Heart right ventricle (tissue), 16 donors: ENCODE measurements at regions of chr18 and their contacts with region 1.

Region 1: DNA sequence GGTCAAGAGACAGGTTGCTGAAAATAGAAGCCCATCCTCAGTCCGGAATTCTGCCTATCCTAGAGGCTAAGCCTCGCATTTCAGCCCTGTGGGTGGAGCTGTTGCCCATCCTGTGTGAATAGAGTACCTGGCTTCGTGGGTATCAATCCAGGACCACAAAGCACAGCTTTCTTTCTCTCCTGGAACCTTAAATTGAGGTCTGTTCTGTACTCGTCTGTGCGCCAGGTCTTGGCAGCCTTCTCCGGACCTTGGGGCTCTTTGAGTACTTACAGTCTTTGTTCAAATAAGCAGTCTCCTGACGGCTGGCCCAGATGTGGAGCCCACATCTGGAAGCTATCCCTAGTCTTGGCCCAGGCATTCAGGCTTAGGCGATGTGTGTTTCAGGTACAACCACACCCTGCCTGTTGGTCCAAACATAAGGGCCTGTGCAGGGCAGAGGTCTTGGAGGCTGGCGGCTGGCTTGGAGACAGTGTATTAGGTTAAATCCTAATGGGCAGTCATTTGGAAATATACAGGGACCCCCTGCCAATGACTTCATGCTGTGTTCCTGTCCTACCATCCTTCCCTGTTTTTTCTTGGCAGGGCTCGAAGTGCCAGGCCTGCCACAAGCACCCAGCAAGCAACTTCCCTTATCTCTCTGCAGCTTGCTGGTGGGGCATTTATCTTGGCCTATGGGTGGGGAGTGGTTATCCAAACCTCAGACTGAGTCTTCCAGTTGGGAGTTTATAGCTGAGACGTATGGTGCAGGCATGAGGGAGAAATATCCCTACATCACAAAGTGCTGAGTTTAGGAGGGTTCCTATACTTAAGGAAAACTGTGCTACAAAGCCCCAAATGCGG is 294.1 kb downstream of the BCL2 start:
- DNase-seq: peak in 1 of 2 donors; percentile 19
- ATAC-seq: peak in 5 of 8 donors; percentile 44 to 85 (median 75)
- H3K4me3 ChIP-seq: no peak overlapping the region
- H3K27ac ChIP-seq: no peak overlapping the region
- H3K4me1 ChIP-seq: peaks cover 0 to 4% (median 0%) of the 10 kb centered on the region in 9 donors
- H3K27me3 ChIP-seq: no peaks in the 10 kb centered on the region
- CTCF ChIP-seq: peak; percentile 30 to 65 (median 51)

Region 2: GRCh38 chr18:62957885-62958472 is 67.5 kb before region 1 on chr18:
- intact Hi-C with region 1: no loop called
- DNase-seq: peak in 1 of 2 donors; percentile 46
- ATAC-seq: peak in 7 of 8 donors; percentile 29 to 72 (median 51)
- H3K4me3 ChIP-seq: no peak overlapping the region
- H3K27ac ChIP-seq: no peak overlapping the region
- H3K4me1 ChIP-seq: peaks cover 0 to 16% (median 8%) of the 10 kb centered on the region in 9 donors
- H3K27me3 ChIP-seq: no peaks in the 10 kb centered on the region
- CTCF ChIP-seq: peak in 8 of 9 donors; percentile 33 to 65 (median 56)

Region 3: DNA sequence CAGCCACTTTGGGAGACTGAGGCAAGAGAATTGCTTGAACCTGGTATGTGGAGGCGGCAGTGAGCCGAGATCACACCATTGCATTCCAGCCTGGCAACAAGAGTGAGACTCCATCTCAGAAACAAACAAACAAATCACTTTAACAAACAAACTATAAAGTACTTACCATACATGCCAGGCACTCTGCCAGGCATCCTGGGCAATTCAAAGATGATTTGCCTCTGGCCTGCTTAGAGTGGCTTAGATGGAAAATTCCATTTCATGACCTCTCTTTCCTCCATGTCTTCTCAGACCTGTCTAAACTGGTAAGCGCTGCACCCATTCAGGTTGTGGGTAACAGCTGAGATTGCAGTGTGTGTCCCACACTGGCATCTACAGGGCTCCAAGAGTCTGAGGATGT is 20.9 kb after region 1 on chr18:
- intact Hi-C with region 1: no loop called
- DNase-seq: no peak
- ATAC-seq: no peak
- H3K4me3 ChIP-seq: no peak overlapping the region
- H3K27ac ChIP-seq: no peak overlapping the region
- H3K4me1 ChIP-seq: no peaks in the 10 kb centered on the region
- H3K27me3 ChIP-seq: peaks cover 0 to 8% (median 0%) of the 10 kb centered on the region in 7 donors
- CTCF ChIP-seq: no peak

Region 4: DNA sequence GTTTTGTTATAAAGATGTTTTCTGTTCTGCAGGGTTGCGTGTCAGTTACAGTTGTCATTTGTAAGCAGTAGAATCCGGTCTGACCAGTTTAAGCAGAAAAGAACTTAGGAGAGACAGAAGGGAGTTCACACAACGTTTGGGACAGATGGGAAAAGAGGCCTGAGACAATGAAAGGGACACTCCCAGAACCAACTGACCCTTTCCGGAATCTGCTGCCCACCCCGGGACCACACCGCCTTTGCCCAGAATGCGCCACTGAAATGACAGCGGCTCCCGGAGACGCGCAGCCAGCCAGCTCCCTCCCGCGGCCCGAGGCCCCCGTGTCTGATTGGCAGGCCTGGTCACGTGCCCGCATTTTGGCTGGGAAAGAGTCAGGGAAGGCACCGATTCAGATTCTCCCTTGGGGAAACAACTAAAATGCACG is 49.5 kb after region 1 on chr18:
- intact Hi-C with region 1: no loop called
- DNase-seq: peak; percentile 78 to 82
- ATAC-seq: peak; percentile 91 to 99 (median 97)
- H3K4me3 ChIP-seq: peak overlapping the region in 9 of 10 donors; percentile 26 to 57 (median 52)
- H3K27ac ChIP-seq: peak overlapping the region in 9 of 10 donors; percentile 23 to 73 (median 56)
- H3K4me1 ChIP-seq: peaks cover 0 to 14% (median 0%) of the 10 kb centered on the region in 9 donors
- H3K27me3 ChIP-seq: no peaks in the 10 kb centered on the region
- CTCF ChIP-seq: peak in 2 of 9 donors; percentile 11 to 18

Region 5: DNA sequence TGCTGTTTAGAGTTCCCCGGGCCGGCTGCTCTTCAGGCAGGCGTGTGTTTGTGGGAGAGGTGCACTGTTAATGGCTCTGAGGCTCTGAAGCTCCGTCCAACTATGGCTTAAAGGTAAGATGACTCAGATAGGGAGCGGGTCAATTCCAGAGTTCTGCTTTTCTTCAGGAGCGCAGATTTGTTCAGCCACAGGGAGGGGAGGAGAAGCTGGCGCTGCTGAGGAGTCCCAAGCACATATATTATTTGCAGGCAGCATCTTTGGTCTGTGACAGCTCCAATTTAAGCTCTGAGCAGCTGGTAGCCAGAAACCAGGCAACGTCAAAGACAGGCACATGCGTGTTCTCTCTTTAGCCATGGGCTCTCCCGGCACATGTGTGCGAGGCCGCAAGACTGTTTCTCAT is 64.9 kb after region 1 on chr18:
- intact Hi-C with region 1: no loop called
- DNase-seq: no peak
- ATAC-seq: no peak
- H3K4me3 ChIP-seq: no peak overlapping the region
- H3K27ac ChIP-seq: no peak overlapping the region
- H3K4me1 ChIP-seq: no peaks in the 10 kb centered on the region
- H3K27me3 ChIP-seq: no peaks in the 10 kb centered on the region
- CTCF ChIP-seq: no peak

Region 6: DNA sequence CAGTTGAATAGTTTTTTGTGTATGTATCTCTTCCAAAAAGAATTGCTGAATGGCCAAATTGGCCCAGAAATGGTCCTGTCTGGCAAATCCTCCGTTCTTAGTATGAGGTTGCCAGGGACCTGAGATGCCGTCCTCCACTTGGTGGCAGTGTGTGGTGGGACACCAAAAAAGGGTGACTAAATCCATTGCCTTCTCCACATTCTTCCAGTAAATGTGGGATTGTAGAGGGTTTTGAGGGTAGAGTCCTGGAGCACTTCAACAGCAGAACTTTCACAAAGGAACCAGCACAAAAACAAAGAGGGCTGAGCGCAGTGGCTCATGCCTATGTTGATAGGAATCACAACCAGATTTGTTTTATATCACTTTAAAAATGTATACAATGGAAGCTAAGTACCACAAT is 94.2 kb after region 1 on chr18:
- intact Hi-C with region 1: loop called in 4 of 10 experiments (anchors 5 to 10 kb)
- DNase-seq: no peak
- ATAC-seq: peak in 6 of 8 donors; percentile 29 to 77 (median 67)
- H3K4me3 ChIP-seq: no peak overlapping the region
- H3K27ac ChIP-seq: no peak overlapping the region
- H3K4me1 ChIP-seq: peaks cover 0 to 21% (median 7%) of the 10 kb centered on the region in 9 donors
- H3K27me3 ChIP-seq: no peaks in the 10 kb centered on the region
- CTCF ChIP-seq: peak in 8 of 9 donors; percentile 12 to 68 (median 50)

Region 7: GRCh38 chr18:63138436-63139340 is 113.2 kb after region 1 on chr18:
- intact Hi-C with region 1: loop called in 3 of 10 experiments (anchors 10 kb)
- DNase-seq: peak in 1 of 2 donors; percentile 39
- ATAC-seq: peak in 6 of 8 donors; percentile 32 to 54 (median 46)
- H3K4me3 ChIP-seq: peak overlapping the region in 8 of 10 donors; percentile 4 to 41 (median 30)
- H3K27ac ChIP-seq: peak overlapping the region in 7 of 10 donors; percentile 9 to 77 (median 49)
- H3K4me1 ChIP-seq: peaks cover 0 to 67% (median 58%) of the 10 kb centered on the region in 9 donors
- H3K27me3 ChIP-seq: no peaks in the 10 kb centered on the region
- CTCF ChIP-seq: no peak

Region 8: GRCh38 chr18:63267975-63268721 is 242.7 kb after region 1 on chr18:
- intact Hi-C with region 1: loop called in 1 of 10 experiments (anchors 10 kb)
- DNase-seq: no peak
- ATAC-seq: no peak
- H3K4me3 ChIP-seq: no peak overlapping the region
- H3K27ac ChIP-seq: no peak overlapping the region
- H3K4me1 ChIP-seq: peaks cover 0 to 34% (median 16%) of the 10 kb centered on the region in 9 donors
- H3K27me3 ChIP-seq: no peaks in the 10 kb centered on the region
- CTCF ChIP-seq: no peak

Region 9: GRCh38 chr18:63329431-63330145 is 304.1 kb after region 1 on chr18:
- intact Hi-C with region 1: loop called in 2 of 10 experiments (anchors 5 kb)
- DNase-seq: no peak
- ATAC-seq: no peak
- H3K4me3 ChIP-seq: no peak overlapping the region
- H3K27ac ChIP-seq: no peak overlapping the region
- H3K4me1 ChIP-seq: no peaks in the 10 kb centered on the region
- H3K27me3 ChIP-seq: no peaks in the 10 kb centered on the region
- CTCF ChIP-seq: no peak